ENCODE measurements at regions of chr3 and their contacts with region 1.

Region 1: GRCh38 chr3:190120269-190121060 is at the start of gene P3H2:
- DNase-seq: peak; percentile 35 to 92
- H3K4me3 ChIP-seq: peak within 1 kb of the TSS; percentile 89 to 95
- H3K27ac ChIP-seq: peak within 1 kb of the TSS; percentile 91 to 92
- H3K4me1 ChIP-seq: peaks cover 4 to 11% of the 10 kb centered on the region in 2 donors
- H3K27me3 ChIP-seq: no peaks in the 10 kb centered on the region
- CTCF ChIP-seq: peak; percentile 59 to 73 (median 60)
- total RNA-seq, gene P3H2: 15.6 TPM

Region 2: DNA sequence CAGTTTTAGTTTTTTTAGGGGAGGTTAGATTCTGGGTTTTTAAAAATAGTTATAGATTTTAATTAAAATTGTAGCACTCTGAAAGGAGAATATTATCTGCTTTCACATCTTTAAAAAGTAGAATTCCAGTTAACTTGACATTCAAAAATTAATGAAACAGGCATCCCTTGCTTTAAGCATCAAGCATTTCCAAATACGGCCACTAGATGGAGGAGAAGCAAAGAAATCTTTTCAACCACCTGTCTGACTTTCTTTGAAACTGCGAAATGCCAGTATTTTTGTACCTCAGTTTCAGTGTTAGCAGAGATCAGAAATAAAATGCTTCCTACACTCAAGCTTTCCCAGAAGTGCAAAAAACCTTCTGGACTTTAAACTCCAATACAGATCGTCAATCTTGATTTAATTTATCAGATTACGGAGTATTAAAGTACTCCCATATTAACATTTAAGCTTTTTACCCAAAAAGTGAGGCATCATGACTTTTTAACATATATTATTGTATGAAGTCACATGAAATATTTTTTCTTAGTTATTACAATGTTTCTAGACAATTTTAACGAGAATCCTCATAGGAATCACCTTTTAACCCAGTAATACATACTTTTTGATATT is 153.1 kb before region 1 on chr3:
- intact Hi-C with region 1: loop called (anchors 1 kb)
- DNase-seq: no peak
- H3K4me3 ChIP-seq: no peak overlapping the region
- H3K27ac ChIP-seq: no peak overlapping the region
- H3K4me1 ChIP-seq: no peaks in the 10 kb centered on the region
- H3K27me3 ChIP-seq: no peaks in the 10 kb centered on the region
- CTCF ChIP-seq: peak; percentile 61 to 85 (median 84)

Region 3: GRCh38 chr3:190017521-190018288 is 102.8 kb before region 1 on chr3:
- intact Hi-C with region 1: loop called (anchors 1 kb)
- DNase-seq: peak in 1 of 2 donors; percentile 67
- H3K4me3 ChIP-seq: no peak overlapping the region
- H3K27ac ChIP-seq: no peak overlapping the region
- H3K4me1 ChIP-seq: peaks cover 0 to 2% of the 10 kb centered on the region in 2 donors
- H3K27me3 ChIP-seq: no peaks in the 10 kb centered on the region
- CTCF ChIP-seq: peak in 2 of 3 experiments; percentile 6 to 44

Region 4: GRCh38 chr3:190076601-190077396 is 43.7 kb before region 1 on chr3:
- intact Hi-C with region 1: loop called (anchors 5 kb)
- DNase-seq: peak; percentile 27 to 89
- H3K4me3 ChIP-seq: no peak overlapping the region
- H3K27ac ChIP-seq: peak overlapping the region; percentile 77 to 78
- H3K4me1 ChIP-seq: peaks cover 4 to 16% of the 10 kb centered on the region in 2 donors
- H3K27me3 ChIP-seq: no peaks in the 10 kb centered on the region
- CTCF ChIP-seq: no peak

Region 5: GRCh38 chr3:190183121-190183520 is 62.7 kb after region 1 on chr3:
- intact Hi-C with region 1: loop called (anchors 2 kb)
- DNase-seq: no peak
- H3K4me3 ChIP-seq: no peak overlapping the region
- H3K27ac ChIP-seq: no peak overlapping the region
- H3K4me1 ChIP-seq: no peaks in the 10 kb centered on the region
- H3K27me3 ChIP-seq: no peaks in the 10 kb centered on the region
- CTCF ChIP-seq: no peak

Region 6: DNA sequence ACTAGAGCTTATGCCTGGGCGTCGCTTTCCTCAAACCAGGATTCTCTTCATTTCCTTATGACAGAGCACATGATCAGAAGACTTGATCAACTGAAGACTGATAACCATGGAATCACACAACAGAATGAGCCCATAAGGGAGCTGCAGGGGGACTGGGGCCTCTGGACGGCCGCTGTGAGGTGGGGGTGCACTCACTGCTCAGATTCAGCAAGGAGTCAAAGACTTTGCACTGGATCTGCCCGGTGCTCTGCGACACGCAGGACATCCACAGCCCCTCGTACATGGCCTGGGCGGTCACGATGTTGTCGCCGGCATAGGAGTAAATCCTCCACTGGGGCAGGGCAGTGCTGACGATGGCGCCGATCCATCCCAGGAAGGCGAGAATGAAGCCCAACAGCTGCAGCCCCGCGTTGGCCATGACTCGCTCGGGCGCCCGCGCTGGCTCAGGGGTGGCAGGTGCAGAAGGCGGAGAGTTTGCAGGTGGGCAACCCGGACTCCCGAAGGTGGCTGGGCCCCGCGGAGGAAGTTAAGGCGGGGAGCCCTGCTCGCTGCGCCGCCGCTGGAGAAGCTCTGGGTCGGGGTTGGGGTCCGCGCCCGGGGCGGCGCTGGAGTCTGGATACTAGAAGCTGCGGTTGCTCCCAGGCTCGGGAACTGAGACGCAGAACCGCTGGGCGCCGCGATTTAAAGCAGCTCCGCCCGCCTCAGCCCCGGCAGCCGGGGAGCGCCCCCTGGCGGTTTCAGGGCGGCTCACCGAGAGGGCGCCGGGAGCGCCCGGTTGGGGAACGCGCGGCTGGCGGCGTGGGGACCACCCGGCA is 201.5 kb after region 1 on chr3 and contains the start of gene CLDN1:
- intact Hi-C with region 1: loop called (anchors 10 kb)
- DNase-seq: peak in 1 of 2 donors; percentile 85
- H3K4me3 ChIP-seq: peak within 1 kb of the TSS; percentile 58 to 69
- H3K27ac ChIP-seq: no peak within 1 kb of the TSS
- H3K4me1 ChIP-seq: no peaks in the 10 kb centered on the region
- H3K27me3 ChIP-seq: no peaks in the 10 kb centered on the region
- CTCF ChIP-seq: peak; percentile 79 to 98 (median 95)
- total RNA-seq, gene CLDN1: 0.53 TPM

Region 7: DNA sequence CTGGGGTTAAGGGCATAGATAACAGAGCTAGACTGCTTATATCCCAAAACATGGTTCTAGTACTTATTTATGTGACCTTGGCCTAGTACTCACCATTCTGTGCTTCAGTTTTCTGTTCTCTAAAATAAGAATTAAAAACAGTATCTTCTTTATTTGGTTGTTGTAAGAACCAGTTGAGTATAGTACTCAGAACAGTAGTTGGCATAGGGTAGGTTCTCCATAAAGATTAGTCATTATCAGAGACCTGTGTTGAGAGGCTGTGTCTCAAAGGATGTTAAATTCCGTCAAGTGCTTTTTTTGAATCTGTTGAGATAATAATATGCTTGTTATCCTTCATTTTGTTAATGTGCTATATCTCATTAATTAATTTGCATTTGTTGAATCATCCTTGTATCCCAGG is 1031.2 kb after region 1 on chr3:
- intact Hi-C with region 1: no loop called
- DNase-seq: no peak
- H3K4me3 ChIP-seq: no peak overlapping the region
- H3K27ac ChIP-seq: no peak overlapping the region
- H3K4me1 ChIP-seq: no peaks in the 10 kb centered on the region
- H3K27me3 ChIP-seq: no peaks in the 10 kb centered on the region
- CTCF ChIP-seq: no peak

Measured in ascending aorta (tissue), 2 donors.